CD4-positive, alpha-beta memory T cell (primary cell): ENCODE measurements at regions of chr22 and their contacts with region 1.

Region 1: DNA sequence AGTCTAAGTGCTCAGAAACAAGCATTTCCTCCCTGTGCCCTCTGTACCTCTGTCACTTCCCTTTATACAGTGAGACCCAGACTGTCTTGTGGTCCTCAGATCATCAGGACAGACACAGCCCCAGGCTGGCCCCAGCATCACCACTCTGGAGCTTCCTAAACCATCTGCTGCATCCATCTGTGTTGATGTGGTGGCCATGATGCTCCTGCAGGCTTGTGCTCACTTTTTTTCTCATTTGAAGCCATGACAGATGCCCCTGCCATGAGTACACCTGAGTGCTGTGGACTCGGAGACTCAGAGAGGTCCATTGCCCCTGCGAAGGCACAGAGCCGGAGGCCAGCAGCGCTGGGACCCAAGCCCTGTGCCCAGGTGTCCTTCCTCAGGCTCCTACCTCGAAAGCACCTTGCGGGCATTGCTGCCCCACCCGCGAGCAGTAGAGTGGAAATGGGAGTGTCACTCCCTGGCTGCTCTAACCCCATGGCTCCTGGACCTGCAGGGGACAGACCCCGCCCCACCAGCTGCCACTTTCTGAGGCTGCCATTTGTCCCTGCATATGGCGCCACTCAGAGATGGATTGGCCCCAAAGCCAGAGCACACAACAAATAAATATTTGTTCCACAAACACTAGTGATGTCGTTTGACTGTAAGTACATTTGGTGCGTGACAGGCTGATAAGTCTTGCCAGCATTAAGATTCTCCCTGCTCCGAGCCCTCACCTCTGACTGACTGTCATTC is 593.5 kb downstream of the TBC1D22A start:
- DNase-seq: no peak
- H3K4me3 ChIP-seq: no peak overlapping the region
- H3K4me3 Mint-ChIP-seq: no peak overlapping the region
- H3K27ac ChIP-seq: no peak overlapping the region
- H3K27ac Mint-ChIP-seq: no peak overlapping the region
- H3K4me1 ChIP-seq: no peaks in the 10 kb centered on the region
- H3K4me1 Mint-ChIP-seq: no peaks in the 10 kb centered on the region
- H3K27me3 ChIP-seq: no peaks in the 10 kb centered on the region
- H3K27me3 Mint-ChIP-seq: peaks cover 2% of the 10 kb centered on the region in 2 donors

Region 2: DNA sequence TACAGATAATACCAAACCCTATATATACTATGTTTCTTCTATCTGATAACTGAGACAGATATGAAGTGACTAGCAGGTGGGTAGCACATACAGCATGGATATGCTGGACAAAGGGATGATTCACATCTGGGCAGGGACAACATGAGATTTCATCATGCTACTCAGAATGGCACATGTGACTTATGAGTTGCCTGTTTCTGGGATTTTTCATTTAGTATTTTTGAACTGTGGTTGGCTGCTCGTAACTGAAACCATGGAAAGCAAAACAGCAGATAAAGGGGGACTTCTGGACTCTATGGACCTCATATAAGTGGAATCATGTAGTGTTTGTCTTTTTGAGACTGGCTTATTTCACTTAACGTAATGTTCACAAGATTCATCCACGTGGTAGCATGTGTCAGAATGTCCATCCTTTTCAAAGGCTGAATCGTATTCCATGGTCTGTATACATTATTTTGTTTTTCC is 289.5 kb after region 1 on chr22:
- CTCF ChIA-PET with region 1: no interaction called
- POLR2A ChIA-PET with region 1: no interaction called
- intact Hi-C with region 1: no loop called
- DNase-seq: no peak
- H3K4me3 ChIP-seq: no peak overlapping the region
- H3K4me3 Mint-ChIP-seq: no peak overlapping the region
- H3K27ac ChIP-seq: no peak overlapping the region
- H3K27ac Mint-ChIP-seq: no peak overlapping the region
- H3K4me1 ChIP-seq: no peaks in the 10 kb centered on the region
- H3K4me1 Mint-ChIP-seq: no peaks in the 10 kb centered on the region
- H3K27me3 ChIP-seq: no peaks in the 10 kb centered on the region
- H3K27me3 Mint-ChIP-seq: peaks cover 0 to 4% of the 10 kb centered on the region in 2 donors

Region 3: GRCh38 chr22:49052023-49052538 is 1696.1 kb after region 1 on chr22:
- CTCF ChIA-PET with region 1: no interaction called
- POLR2A ChIA-PET with region 1: no interaction called
- intact Hi-C with region 1: loop called (anchors 10 kb)
- DNase-seq: peak in 4 of 5 donors; percentile 15 to 54 (median 24)
- H3K4me3 ChIP-seq: peak overlapping the region in 1 of 2 donors; percentile 41
- H3K4me3 Mint-ChIP-seq: peak overlapping the region in 7 of 8 donors; percentile 79 to 92 (median 83)
- H3K27ac ChIP-seq: no peak overlapping the region
- H3K27ac Mint-ChIP-seq: peak overlapping the region in 3 of 7 donors; percentile 48 to 88 (median 53)
- H3K4me1 ChIP-seq: no peaks in the 10 kb centered on the region
- H3K4me1 Mint-ChIP-seq: peaks cover 0 to 2% (median 1%) of the 10 kb centered on the region in 4 donors
- H3K27me3 ChIP-seq: no peaks in the 10 kb centered on the region
- H3K27me3 Mint-ChIP-seq: peaks cover 0 to 14% of the 10 kb centered on the region in 2 donors